Calu3 (cell line): ENCODE measurements at regions of chr6 and their contacts with region 1.

Region 1: DNA sequence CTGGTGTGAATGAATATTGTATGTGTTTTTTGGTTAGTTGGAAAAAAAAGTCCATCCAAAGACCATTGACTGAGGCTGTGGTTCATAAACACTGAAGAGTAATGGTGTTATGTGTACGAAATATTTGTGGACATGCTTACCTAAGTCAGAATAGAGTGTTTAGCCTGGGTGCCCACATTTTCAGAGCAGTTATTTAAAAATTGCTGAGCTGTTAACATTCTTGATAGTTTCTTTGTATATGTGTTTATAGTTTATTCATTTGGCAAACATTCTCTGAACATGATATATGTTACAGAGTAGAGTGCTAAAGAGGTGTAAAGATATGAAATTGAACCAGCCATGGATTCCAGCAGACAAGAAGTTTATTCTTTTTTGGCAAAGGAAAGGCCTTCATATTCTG is 20.6 kb downstream of the CDKAL1 start:
- DNase-seq: no peak
- H3K4me3 Mint-ChIP-seq: no peak overlapping the region
- H3K27ac Mint-ChIP-seq: no peak overlapping the region
- H3K4me1 Mint-ChIP-seq: no peaks in the 10 kb centered on the region
- H3K27me3 Mint-ChIP-seq: no peaks in the 10 kb centered on the region
- CTCF ChIP-seq: no peak

Region 2: DNA sequence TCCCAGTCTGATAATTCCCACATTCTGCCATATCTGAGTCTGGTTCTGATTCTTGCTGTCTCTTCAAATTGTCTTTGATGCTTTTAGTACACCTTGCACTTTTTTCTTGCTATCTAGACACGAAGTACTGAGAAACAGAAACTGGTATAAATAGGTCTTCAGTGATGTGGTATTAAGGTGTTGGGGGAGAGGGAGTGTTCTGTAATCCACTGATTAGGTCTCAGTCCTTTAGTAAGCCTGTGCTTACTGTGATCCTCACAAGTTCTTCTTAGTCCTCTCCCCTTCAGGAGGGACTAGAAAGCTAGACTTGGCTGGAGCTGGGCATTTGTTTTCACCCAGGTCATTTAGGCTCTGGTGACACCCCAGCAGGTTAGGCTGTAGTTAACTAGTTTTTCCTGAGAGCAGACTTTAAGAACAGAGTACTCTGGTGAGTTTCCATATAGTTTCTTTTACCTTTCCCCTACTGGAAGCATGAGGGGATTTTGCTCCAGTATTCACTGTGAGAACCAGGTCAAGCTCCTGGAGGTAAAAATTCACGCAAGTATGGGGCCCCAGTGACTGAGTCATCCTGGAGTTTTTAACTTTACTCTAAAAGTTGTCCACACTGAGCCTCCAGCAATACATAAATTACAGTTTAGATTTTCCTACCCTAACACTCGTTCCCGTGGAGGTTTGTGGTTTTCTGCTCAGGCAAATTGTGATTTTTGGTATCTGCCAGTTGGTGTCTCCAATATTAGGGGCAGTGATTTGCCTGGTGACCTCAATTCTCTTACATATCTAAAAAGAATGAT is 134.1 kb after region 1 on chr6:
- CTCF ChIA-PET with region 1: no interaction called
- intact Hi-C with region 1: no loop called
- DNase-seq: peak; percentile 37
- H3K4me3 Mint-ChIP-seq: peak overlapping the region; percentile 4
- H3K27ac Mint-ChIP-seq: peak overlapping the region; percentile 9
- H3K4me1 Mint-ChIP-seq: peaks cover 47% of the 10 kb centered on the region
- H3K27me3 Mint-ChIP-seq: no peaks in the 10 kb centered on the region
- CTCF ChIP-seq: no peak

Region 3: DNA sequence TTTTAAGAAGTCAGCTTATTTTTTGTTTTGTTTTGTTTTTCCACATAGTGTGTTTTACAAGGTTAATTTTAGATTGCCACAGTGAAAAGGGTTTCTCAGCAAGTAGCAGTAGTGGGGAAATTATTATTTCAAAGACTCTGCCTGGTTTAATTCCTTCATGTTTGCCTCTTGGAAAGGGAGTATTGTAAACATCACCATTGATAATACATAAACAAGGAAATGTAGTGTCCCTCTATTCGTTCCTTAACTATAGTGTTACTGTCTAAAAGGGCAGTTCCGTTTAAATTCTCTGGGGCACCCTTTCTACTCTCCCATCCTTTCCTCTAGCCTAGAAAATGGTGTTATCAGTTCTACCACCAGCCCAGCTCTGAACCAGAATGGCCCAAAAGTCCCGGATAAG is 647.7 kb after region 1 on chr6:
- CTCF ChIA-PET with region 1: interaction called, 10 read pairs
- intact Hi-C with region 1: no loop called
- DNase-seq: no peak
- H3K4me3 Mint-ChIP-seq: no peak overlapping the region
- H3K27ac Mint-ChIP-seq: no peak overlapping the region
- H3K4me1 Mint-ChIP-seq: peaks cover 30% of the 10 kb centered on the region
- H3K27me3 Mint-ChIP-seq: no peaks in the 10 kb centered on the region
- CTCF ChIP-seq: no peak